Activated T-helper 2 cell treated with anti-CD3 and anti-CD28 coated beads, Interferon-gamma antibody, Interleukin-2, Interleukin-4, amounts not matched to agents 10 μg/mL and 5 μg/mL and 100 μg/mL, durations not matched to agents 14 hours and 24 hours and 36 hours (primary cell): ENCODE measurements at regions of chr10 and their contacts with region 1.

Region 1: DNA sequence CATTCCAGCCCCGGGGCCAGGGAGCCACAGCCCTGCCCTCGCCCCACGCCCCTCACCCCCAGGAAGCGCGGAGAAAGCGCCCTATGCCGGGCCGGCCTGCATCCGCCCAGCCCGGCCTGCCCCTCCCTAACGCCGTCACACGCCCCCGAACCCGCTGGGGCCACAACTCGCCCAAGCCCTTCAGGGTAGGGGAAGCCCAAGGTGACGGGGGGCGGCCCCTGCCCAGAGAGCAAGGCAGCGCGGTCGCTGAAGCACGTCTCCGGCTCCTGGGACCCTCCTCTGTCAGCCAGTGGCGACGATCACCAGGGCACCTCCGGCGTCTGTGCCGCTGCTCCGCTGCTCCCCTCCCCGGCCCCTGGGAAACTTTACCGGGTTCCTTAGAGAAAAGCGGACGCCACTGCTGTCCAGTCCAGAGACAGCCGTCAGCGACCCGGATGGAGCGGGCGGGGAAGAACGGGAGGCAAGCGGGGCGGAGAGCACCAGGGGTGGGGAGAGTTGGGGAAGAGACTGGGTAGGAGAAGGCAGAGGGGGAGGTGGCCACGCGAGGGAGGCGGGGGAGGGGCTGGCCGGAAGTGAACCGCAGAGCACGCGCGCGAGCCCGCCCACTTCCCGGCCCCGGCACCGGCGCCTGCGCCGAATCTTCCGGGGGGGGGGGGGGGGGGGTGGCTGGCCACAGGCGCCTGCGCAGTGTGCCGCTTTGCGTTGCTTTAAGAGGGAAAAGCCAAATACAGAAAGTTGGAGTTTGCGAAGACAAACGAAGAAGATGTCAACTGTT is at the start of gene HERC4:
- DNase-seq: peak; percentile 83
- H3K4me3 Mint-ChIP-seq: peak within 1 kb of the TSS; percentile 96
- H3K27ac Mint-ChIP-seq: peak within 1 kb of the TSS; percentile 92
- H3K4me1 Mint-ChIP-seq: peaks cover 42% of the 10 kb centered on the region
- H3K27me3 Mint-ChIP-seq: no peaks in the 10 kb centered on the region
- total RNA-seq, gene HERC4: 48.9 and 55.7 TPM in 2 replicates

Region 2: GRCh38 chr10:67612577-67613537 is 462.1 kb before region 1 on chr10:
- intact Hi-C with region 1: loop called (anchors 5 kb)
- DNase-seq: peak; percentile 77
- H3K4me3 Mint-ChIP-seq: peak overlapping the region; percentile 38
- H3K27ac Mint-ChIP-seq: peak overlapping the region; percentile 56
- H3K4me1 Mint-ChIP-seq: peaks cover 27% of the 10 kb centered on the region
- H3K27me3 Mint-ChIP-seq: peaks cover 40% of the 10 kb centered on the region

Region 3: GRCh38 chr10:67849331-67850011 is 225.5 kb before region 1 on chr10:
- intact Hi-C with region 1: loop called (anchors 1 kb)
- DNase-seq: peak; percentile 90
- H3K4me3 Mint-ChIP-seq: peak overlapping the region; percentile 92
- H3K27ac Mint-ChIP-seq: peak overlapping the region; percentile 94
- H3K4me1 Mint-ChIP-seq: peaks cover 8% of the 10 kb centered on the region
- H3K27me3 Mint-ChIP-seq: no peaks in the 10 kb centered on the region

Region 4: GRCh38 chr10:67861750-67862460 is 213.1 kb before region 1 on chr10:
- intact Hi-C with region 1: no loop called
- DNase-seq: no peak
- H3K4me3 Mint-ChIP-seq: no peak overlapping the region
- H3K27ac Mint-ChIP-seq: no peak overlapping the region
- H3K4me1 Mint-ChIP-seq: no peaks in the 10 kb centered on the region
- H3K27me3 Mint-ChIP-seq: no peaks in the 10 kb centered on the region

Region 5: GRCh38 chr10:68088744-68089143 is 13.8 kb after region 1 on chr10:
- intact Hi-C with region 1: loop called (anchors 1 kb)
- DNase-seq: no peak
- H3K4me3 Mint-ChIP-seq: no peak overlapping the region
- H3K27ac Mint-ChIP-seq: no peak overlapping the region
- H3K4me1 Mint-ChIP-seq: peaks cover 12% of the 10 kb centered on the region
- H3K27me3 Mint-ChIP-seq: peaks cover 2% of the 10 kb centered on the region

Region 6: DNA sequence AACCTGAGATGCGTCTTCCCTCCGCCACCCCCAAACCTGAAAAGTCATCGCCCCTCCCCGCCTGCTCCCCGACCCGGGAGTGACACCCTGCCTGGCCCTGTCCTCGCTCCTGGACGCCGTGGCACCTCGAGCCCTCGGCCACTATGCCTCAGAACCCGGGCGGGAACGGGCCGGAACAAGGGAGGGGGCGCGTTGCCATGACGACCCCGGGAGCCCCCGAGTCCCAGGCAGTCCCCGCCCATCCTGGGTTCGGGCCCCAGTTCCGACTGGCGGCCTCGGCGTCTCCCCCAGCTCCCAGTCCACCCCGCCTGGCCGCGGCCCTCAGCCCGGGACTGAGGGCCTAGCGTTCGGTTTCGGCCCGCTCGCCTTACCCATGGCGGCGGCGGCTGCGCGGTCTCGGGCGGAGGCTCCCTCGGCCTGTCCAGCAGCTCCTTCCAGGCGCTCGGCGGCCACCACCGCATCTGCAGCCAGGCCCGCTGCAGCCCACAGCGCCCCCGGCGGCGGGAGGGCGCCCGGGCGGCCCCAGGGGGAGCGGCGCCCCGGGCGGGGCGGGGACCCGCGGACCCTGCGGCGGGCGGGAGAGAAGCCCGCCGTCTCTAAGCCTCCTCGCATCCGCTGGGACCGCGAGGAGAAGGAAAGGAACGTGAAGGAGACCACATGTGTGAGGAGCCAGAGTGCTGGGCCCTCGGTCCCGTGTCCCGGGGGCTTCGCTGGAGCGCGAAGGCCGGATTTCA is 332.0 kb after region 1 on chr10 and contains the start of gene RUFY2:
- intact Hi-C with region 1: loop called (anchors 10 kb)
- DNase-seq: peak; percentile 75
- H3K4me3 Mint-ChIP-seq: peak within 1 kb of the TSS; percentile 87
- H3K27ac Mint-ChIP-seq: peak within 1 kb of the TSS; percentile 80
- H3K4me1 Mint-ChIP-seq: peaks cover 14% of the 10 kb centered on the region
- H3K27me3 Mint-ChIP-seq: no peaks in the 10 kb centered on the region
- total RNA-seq, gene RUFY2: 11.3 and 12.1 TPM in 2 replicates